ENCODE measurements at regions of chr6 and their contacts with region 1.

Region 1: DNA sequence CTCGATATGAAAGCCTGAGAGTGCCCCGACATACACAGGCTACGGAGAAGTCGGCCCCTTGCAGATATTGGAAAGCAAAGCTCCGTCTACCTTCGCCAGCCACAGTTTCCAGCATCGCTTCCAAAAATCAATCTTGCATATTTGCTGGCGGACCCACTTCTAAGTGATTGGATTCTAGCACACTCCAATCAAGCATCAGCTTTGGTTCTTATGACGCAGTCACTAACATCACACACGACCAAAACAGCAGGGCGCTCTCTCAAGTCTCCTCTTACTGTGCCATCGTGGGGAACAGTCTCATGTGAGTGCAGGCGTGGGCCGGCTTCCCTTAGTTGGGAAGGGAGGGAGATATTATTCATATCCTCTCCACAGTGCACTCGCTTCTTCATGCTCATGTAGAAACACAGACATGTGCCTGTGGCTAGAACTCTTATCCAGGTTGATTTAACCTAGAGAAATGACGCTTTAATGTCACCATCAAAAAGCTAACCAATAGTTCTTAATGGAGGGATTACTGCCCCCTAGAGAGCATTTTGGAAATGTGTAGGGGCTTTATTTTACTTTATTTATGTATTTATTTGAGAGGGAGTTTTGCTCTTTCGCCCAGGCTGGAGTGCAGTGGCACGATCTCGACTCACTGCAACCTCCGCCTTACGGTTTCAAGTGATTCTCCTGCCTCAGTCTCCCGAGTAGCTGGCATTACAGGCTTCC is 229.8 kb downstream of the SOD2 start:
- DNase-seq: peak in 1 of 5 donors; percentile 1
- H3K4me3 ChIP-seq: no peak overlapping the region
- H3K4me3 Mint-ChIP-seq: no peak overlapping the region
- H3K27ac ChIP-seq: no peak overlapping the region
- H3K27ac Mint-ChIP-seq: no peak overlapping the region
- H3K4me1 ChIP-seq: no peaks in the 10 kb centered on the region
- H3K4me1 Mint-ChIP-seq: no peaks in the 10 kb centered on the region
- H3K27me3 ChIP-seq: peaks cover 3% of the 10 kb centered on the region
- H3K27me3 Mint-ChIP-seq: peaks cover 9% of the 10 kb centered on the region in 2 donors

Region 2: GRCh38 chr6:159169193-159169555 is 294.1 kb before region 1 on chr6 and contains the start of gene FNDC1:
- CTCF ChIA-PET with region 1: no interaction called
- POLR2A ChIA-PET with region 1: no interaction called
- intact Hi-C with region 1: loop called (anchors 5 kb)
- DNase-seq: peak in 4 of 5 donors; percentile 43 to 63 (median 52)
- H3K4me3 ChIP-seq: peak within 1 kb of the TSS in 1 of 2 donors; percentile 10
- H3K4me3 Mint-ChIP-seq: peak within 1 kb of the TSS; percentile 69 to 79 (median 76)
- H3K27ac ChIP-seq: no peak within 1 kb of the TSS
- H3K27ac Mint-ChIP-seq: peak within 1 kb of the TSS in 1 of 7 donors; percentile 62
- H3K4me1 ChIP-seq: peaks cover 17% of the 10 kb centered on the region
- H3K4me1 Mint-ChIP-seq: peaks cover 3 to 30% (median 17%) of the 10 kb centered on the region in 4 donors
- H3K27me3 ChIP-seq: peaks cover 41% of the 10 kb centered on the region
- H3K27me3 Mint-ChIP-seq: peaks cover 32 to 59% of the 10 kb centered on the region in 2 donors
- total RNA-seq, gene FNDC1: not detected

Region 3: GRCh38 chr6:159633196-159633595 is 169.9 kb after region 1 on chr6:
- CTCF ChIA-PET with region 1: no interaction called
- POLR2A ChIA-PET with region 1: no interaction called
- intact Hi-C with region 1: no loop called
- DNase-seq: no peak
- H3K4me3 ChIP-seq: no peak overlapping the region
- H3K4me3 Mint-ChIP-seq: no peak overlapping the region
- H3K27ac ChIP-seq: no peak overlapping the region
- H3K27ac Mint-ChIP-seq: no peak overlapping the region
- H3K4me1 ChIP-seq: no peaks in the 10 kb centered on the region
- H3K4me1 Mint-ChIP-seq: no peaks in the 10 kb centered on the region
- H3K27me3 ChIP-seq: no peaks in the 10 kb centered on the region
- H3K27me3 Mint-ChIP-seq: no peaks in the 10 kb centered on the region

Measured in CD4-positive, alpha-beta memory T cell (primary cell).